ENCODE measurements at regions of chr17 and their contacts with region 1.

Region 1: GRCh38 chr17:35189291-35189690 is 4.9 kb downstream of the SLC35G3 start:
- DNase-seq: no peak
- ATAC-seq: no peak
- H3K4me3 ChIP-seq: no peak overlapping the region
- H3K27ac ChIP-seq: no peak overlapping the region
- H3K4me1 ChIP-seq: peaks cover 0 to 19% (median 0%) of the 10 kb centered on the region in 9 donors
- H3K27me3 ChIP-seq: no peaks in the 10 kb centered on the region
- CTCF ChIP-seq: no peak

Region 2: GRCh38 chr17:35291802-35292201 is 102.5 kb after region 1 on chr17:
- intact Hi-C with region 1: loop called in 1 of 10 experiments (anchors 10 kb)
- DNase-seq: no peak
- ATAC-seq: no peak
- H3K4me3 ChIP-seq: no peak overlapping the region
- H3K27ac ChIP-seq: no peak overlapping the region
- H3K4me1 ChIP-seq: peaks cover 0 to 6% (median 0%) of the 10 kb centered on the region in 9 donors
- H3K27me3 ChIP-seq: peaks cover 0 to 10% (median 0%) of the 10 kb centered on the region in 7 donors
- CTCF ChIP-seq: no peak

Measured in heart right ventricle (tissue), 16 donors.